ENCODE measurements at regions of chr16 and their contacts with region 1.

Region 1: DNA sequence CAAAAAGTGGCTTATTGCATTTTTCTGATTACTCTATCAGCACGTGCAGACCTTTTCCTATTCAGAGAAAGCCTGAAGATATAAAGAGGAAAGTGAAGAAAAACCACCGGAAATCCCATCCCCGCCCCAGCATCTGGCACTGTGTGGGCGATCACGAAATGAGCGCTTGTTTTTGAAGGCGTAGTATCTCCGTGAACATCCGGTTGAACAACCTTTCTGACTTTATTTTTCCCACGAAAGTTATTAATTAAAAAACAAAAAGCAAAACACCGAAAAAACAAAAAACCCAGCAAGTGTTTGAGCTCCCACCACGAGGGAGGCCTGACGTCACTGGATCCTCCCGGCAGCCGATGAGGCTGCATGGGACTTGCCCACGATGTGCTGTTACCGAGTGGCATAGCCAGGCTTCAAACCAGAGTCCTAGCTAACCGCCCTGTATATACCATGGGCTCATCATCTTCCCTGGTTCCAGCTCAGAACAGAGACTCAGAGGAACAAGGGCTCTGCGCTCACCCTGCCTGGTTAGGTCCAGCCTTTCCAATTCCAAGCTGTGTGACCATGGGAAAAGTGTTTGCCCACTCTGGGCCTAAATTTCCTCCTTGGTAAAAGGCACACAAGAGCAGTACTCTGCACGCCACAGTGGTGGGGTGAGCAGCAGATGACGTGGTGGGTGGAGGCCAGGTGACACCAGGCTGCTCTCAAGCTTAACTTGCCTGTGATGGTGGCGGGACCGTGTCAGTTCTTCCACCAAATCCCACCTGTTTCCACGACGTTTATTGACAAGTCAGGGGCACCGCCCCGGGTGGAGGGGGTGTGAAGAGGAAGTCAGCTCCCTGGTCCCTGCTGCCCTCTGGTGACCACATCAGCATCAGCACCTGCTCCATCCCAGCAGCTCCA is 34.3 kb upstream of the IL21R start:
- DNase-seq: no peak
- H3K4me3 ChIP-seq: peak overlapping the region; percentile 27
- CTCF ChIP-seq: peak; percentile 95

Region 2: DNA sequence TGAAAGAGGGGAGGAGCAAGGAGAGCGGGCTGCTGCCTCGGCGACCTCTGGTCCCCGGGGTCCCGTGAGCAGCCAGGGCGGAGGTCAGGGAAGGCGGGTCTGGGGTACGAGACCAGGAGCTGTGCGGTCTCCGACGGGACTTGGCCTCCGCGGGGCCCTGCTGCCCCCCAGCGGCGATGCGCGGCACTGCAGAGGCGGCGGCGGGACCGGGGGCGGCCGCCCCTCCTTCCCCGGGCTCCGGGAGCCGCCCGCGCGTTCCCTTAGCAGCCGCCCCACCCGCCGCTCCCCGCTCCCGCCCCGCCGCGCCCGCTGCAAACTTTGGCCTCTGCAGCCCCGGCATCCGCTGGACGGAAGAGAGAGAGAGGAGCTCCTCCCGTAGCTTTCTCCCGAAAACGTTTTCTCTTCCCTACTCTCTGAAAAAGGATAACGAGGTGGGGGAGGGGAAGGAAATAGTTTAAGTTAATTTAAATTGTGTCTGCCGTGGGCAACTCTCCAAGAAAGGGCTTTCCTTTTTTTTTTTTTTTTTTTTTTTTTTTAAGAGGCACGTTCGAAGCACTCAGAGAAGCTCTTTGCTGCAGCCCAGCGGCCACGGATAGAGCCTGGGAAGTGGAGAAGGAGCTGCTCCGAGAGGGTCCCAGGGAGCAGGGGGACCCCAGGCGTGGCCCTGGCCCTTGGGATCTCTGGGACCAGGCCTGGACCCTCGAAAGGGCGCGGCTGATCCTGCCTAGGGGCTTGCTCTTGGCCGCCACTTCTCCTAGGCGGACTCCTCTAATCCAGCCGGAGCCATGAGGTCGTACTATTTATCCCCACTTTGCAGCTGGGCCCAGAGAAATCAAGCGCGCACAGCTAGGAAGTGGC is 257.8 kb before region 1 on chr16:
- CTCF ChIA-PET with region 1: interaction called, 13 read pairs
- POLR2A ChIA-PET with region 1: no interaction called
- DNase-seq: no peak
- H3K4me3 ChIP-seq: peak overlapping the region; percentile 54
- CTCF ChIP-seq: peak; percentile 90

Region 3: GRCh38 chr16:27179500-27180072 is 188.1 kb before region 1 on chr16:
- CTCF ChIA-PET with region 1: interaction called, 34 read pairs
- POLR2A ChIA-PET with region 1: no interaction called
- DNase-seq: no peak
- H3K4me3 ChIP-seq: no peak overlapping the region
- CTCF ChIP-seq: peak; percentile 76

Region 4: DNA sequence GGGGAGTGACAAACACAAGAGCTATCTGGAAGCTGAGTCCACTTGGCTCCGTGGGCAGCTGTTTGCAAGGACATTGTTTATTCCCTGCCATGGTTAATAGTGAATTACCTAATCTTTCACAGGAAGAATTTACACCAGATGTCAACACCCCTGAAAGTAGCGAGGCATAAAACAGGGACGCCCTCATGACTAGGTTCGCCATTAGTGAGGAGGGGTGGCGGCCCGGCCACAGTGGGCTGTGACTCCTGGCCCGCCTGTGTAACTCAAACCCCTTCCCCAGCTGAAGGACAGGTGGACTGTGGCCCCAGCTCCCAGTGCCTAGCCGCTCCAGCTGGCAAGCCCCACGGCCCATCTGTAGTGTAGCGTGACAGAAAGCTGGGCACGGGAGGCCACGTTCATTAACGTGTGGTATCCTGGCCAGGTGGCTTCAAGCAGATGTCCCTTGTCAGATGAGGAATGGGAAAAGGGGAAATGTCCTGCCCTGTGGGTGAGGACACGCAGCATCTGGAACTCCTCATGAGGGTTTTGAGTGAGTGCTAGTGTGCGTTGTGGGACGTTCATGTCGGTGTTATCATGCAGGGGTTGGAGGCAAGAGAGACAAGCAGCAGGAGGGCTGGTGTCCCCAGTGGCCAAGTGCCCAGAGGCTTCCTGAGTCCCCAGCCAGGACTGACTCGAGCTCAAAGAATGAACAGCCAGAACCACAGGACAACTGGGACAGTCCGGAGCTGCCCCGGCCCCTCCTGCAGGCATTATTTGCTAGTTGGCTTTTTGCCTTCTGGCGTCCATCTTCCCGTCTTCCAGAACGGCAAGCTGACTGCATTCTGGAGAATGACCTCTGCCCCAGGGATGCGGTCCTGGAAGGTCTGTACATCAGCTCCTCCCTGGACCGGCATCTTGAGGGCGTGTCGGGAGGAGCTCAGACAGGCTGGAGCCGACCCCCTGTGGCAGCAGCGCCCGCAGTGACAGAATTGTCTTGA is 145.2 kb before region 1 on chr16:
- CTCF ChIA-PET with region 1: interaction called, 22 read pairs
- POLR2A ChIA-PET with region 1: no interaction called
- DNase-seq: no peak
- H3K4me3 ChIP-seq: no peak overlapping the region
- CTCF ChIP-seq: no peak

Region 5: DNA sequence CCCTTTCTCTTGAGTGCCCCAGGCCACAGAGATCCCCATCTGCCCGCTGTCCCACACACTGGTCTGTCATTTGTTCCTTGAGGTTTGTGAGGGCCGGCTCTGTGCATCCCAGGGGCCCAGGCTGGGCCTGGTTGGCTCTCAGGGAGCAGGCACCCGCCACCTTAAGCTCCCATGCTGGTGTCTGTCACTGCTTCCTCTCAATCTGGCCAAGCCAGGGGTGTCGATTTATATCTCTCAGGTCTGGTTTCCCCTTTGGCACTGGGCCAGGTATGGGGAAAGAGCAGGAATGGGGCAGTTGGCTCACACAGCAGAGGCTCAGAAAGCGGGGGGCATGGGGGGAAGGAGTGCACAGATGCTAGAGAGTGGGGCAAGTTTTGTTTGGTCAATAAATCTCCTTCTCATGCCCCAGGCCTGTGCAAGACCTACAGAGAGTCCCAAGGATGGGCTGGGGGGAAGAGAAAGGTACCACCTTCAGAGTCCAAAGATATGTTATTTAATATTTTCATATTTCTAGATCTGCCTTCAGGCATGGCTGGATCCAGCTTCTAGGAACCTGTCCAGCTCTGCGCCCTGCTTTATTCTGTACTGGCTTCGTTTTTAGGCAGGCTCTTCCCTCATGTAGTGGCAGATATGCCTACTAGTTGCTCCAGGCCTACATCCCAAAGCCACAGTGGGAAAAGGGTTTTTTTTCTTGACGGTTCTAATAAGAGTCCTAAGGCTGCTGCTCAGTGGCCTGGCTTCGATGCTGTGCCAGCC is 19.6 kb before region 1 on chr16:
- CTCF ChIA-PET with region 1: interaction called, 13 read pairs
- POLR2A ChIA-PET with region 1: no interaction called
- DNase-seq: no peak
- H3K4me3 ChIP-seq: no peak overlapping the region
- CTCF ChIP-seq: no peak

Region 6: DNA sequence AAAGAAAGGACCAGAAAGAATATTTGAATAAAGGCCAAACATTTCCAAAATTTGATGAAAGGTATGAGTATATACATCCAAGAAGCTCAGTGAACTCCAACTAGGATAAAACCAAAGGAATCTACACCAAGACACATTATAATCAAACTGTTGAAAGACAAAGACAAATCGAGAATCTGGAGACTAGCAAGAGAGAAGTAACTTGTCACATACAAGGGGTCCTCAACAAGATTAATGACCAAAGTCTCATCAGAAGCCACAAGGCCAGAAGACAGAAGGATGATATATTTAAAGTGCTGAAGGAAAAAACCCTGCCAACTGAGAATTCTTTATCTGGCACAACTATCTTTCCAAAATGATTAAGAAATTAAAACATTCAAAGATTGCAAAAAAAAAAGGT is 25.0 kb after region 1 on chr16:
- CTCF ChIA-PET with region 1: interaction called, 12 read pairs
- POLR2A ChIA-PET with region 1: no interaction called
- DNase-seq: no peak
- H3K4me3 ChIP-seq: no peak overlapping the region
- CTCF ChIP-seq: no peak